ENCODE measurements at regions of chr5 and their contacts with region 1.

Region 1: DNA sequence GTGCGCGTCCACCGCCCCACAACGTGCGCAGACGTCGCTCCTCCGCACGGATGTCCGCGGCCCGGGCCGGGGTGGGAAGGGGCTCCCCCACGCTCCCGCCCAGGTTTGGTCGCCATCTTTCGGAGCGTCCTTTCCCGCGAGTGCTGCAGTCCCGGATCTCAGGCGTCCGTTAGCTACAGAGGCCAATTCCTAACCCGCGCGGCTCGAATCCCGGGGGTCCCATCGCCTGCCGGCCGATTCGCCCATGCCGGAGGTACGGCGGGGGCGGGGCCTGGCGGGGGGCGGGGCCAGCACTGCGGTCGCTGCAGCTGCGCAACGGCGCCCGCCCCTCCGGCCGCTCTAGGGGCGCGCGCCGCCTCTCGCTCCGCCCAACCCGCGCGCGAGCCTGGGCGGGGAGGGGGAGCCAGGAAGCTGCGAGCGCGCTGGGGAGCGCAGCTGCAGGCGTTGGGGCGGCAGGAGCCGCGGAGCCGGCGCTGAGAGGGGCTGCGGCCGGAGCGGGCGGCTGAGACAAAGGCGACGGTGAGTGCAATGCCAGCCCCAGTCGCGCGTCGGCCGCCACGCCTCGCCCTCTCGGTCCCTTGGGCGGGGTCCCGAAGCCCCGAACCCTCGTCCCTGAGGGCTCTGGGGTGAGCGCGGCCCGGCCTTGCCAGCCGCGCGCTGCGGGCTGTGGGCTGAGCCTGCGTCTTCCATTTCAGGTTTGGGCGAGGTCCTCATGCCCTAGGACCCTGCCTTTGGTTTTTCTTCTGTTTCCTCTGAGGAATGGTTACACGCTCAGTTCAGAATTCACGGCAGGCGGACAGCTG is at the start of gene CDC42SE2:
- DNase-seq: peak; percentile 91
- ATAC-seq: peak; percentile 86
- H3K4me3 Mint-ChIP-seq: peak within 1 kb of the TSS; percentile 81
- H3K27ac Mint-ChIP-seq: peak within 1 kb of the TSS; percentile 96
- H3K4me1 Mint-ChIP-seq: peaks cover 44% of the 10 kb centered on the region
- H3K27me3 Mint-ChIP-seq: no peaks in the 10 kb centered on the region
- total RNA-seq, gene CDC42SE2: 68.3 to 99.6 TPM

Region 2: DNA sequence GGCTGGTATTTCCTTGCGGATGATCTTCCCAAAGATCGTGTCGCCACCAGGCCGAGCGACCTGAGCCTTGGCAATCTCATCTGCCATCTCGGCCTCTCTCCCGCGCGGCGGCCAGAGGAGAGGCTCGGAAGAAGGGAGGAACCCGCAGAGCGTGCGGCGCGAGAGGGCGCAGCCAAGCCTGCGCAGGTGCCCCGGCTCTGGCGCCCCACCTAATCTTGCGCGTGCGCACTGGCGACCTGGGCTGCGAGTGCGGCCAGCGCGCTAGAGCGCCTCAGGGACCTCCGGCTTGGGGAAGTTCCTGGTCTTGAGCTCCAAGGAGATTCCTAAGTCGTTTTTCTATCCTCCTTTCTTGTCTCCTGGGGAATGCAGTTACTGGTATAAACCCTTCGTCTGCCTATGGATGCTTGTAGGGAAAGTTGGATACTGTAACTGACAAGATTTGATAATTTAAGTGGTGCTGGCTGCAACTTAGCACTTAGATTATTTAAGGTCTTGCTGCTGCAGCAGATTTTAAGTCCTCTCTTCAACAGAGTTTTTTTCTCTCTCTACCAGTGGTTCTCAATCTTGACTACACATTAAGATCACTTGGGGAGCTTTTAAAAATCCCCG is 98.6 kb before region 1 on chr5 and contains the start of gene HINT1:
- CTCF ChIA-PET with region 1: interaction called, 5 read pairs
- POLR2A ChIA-PET with region 1: interaction called, 4 read pairs
- intact Hi-C with region 1: loop called (anchors 1 to 2 kb)
- DNase-seq: peak; percentile 96
- ATAC-seq: peak; percentile 89
- H3K4me3 Mint-ChIP-seq: peak within 1 kb of the TSS; percentile 83
- H3K27ac Mint-ChIP-seq: peak within 1 kb of the TSS; percentile 99
- H3K4me1 Mint-ChIP-seq: peaks cover 51% of the 10 kb centered on the region
- H3K27me3 Mint-ChIP-seq: no peaks in the 10 kb centered on the region
- total RNA-seq, gene HINT1: 298 to 312 TPM

Region 3: GRCh38 chr5:131170540-131171275 is 93.1 kb before region 1 on chr5 and contains the start of gene LYRM7:
- CTCF ChIA-PET with region 1: interaction called, 5 read pairs
- POLR2A ChIA-PET with region 1: interaction called, 4 read pairs
- intact Hi-C with region 1: loop called (anchors 1 to 2 kb)
- DNase-seq: peak; percentile 97
- ATAC-seq: peak; percentile 96
- H3K4me3 Mint-ChIP-seq: peak within 1 kb of the TSS; percentile 95
- H3K27ac Mint-ChIP-seq: peak within 1 kb of the TSS; percentile 93
- H3K4me1 Mint-ChIP-seq: peaks cover 34% of the 10 kb centered on the region
- H3K27me3 Mint-ChIP-seq: no peaks in the 10 kb centered on the region
- total RNA-seq, gene LYRM7: 16.0 to 20.7 TPM

Region 4: GRCh38 chr5:131281133-131281867 is 17.5 kb after region 1 on chr5:
- CTCF ChIA-PET with region 1: interaction called, 33 read pairs
- POLR2A ChIA-PET with region 1: interaction called, 10 read pairs
- intact Hi-C with region 1: loop called (anchors 1 to 2 kb)
- DNase-seq: no peak
- ATAC-seq: peak; percentile 78
- H3K4me3 Mint-ChIP-seq: peak overlapping the region; percentile 74
- H3K27ac Mint-ChIP-seq: peak overlapping the region; percentile 95
- H3K4me1 Mint-ChIP-seq: peaks cover 90% of the 10 kb centered on the region
- H3K27me3 Mint-ChIP-seq: no peaks in the 10 kb centered on the region

Region 5: DNA sequence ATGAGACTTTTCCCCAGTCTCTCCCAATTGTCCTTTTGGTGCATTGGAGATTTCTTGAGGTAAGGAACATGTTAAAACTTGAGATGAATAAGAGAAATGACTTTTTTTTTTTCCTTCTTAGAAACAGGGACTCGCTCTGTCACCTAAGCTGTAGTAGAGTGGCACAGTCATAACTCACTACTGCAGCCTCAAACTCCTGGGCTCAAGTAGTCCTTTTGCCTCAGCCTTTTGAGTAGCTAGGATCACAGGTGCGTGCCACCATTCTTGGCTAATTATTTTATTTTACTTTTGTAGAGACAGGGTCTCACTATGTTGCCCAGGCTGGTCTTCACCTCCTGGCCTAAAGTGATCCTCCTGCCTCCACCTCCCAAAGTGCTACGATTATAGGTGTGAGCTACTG is 25.9 kb after region 1 on chr5:
- CTCF ChIA-PET with region 1: interaction called, 6 read pairs
- POLR2A ChIA-PET with region 1: interaction called, 9 read pairs
- intact Hi-C with region 1: loop called (anchors 1 to 2 kb)
- DNase-seq: peak; percentile 61
- ATAC-seq: peak; percentile 80
- H3K4me3 Mint-ChIP-seq: peak overlapping the region; percentile 64
- H3K27ac Mint-ChIP-seq: peak overlapping the region; percentile 98
- H3K4me1 Mint-ChIP-seq: peaks cover 72% of the 10 kb centered on the region
- H3K27me3 Mint-ChIP-seq: no peaks in the 10 kb centered on the region

Region 6: DNA sequence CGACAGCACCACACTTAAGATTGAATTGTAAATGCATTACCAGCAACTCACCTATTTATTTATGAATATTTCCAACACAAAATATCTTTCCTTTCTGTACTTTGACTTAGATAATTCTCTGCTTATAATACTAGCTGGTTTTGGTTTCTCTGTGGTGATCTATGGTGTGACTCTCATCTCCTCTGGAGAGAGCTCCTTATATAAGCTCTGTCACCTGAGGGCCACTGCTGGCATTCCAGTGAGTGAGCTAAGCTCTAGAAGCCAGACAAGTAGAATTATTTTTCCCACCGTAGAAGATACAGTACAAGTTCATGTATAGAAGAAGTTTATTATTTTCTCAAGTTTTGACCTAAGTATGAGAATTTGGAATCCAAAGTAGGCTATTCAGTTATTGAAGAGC is 111.5 kb after region 1 on chr5:
- CTCF ChIA-PET with region 1: interaction called, 46 read pairs
- POLR2A ChIA-PET with region 1: interaction called, 12 read pairs
- intact Hi-C with region 1: no loop called
- DNase-seq: no peak
- ATAC-seq: no peak
- H3K4me3 Mint-ChIP-seq: no peak overlapping the region
- H3K27ac Mint-ChIP-seq: peak overlapping the region; percentile 71
- H3K4me1 Mint-ChIP-seq: peaks cover 96% of the 10 kb centered on the region
- H3K27me3 Mint-ChIP-seq: no peaks in the 10 kb centered on the region

Region 7: DNA sequence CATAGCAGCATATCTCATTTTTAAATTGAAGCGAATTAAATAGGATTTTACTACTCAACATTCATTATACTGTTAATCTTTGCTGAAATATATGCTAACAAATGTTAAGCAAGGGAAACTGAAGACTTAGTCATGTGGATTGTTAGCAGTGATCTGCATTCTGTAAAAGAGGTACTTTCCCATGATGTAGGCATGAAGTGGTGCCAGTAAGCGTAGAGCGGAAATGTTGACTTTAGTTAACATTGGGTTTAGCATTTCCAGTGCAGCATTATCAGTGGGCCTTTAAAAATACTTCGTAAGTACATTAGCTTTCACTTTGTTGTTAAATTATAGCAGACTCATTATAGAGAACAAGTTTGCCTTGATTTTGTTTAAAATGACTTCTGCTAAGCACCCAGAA is 130.3 kb after region 1 on chr5:
- CTCF ChIA-PET with region 1: interaction called, 11 read pairs
- POLR2A ChIA-PET with region 1: interaction called, 8 read pairs
- intact Hi-C with region 1: no loop called
- DNase-seq: peak; percentile 68
- ATAC-seq: peak; percentile 68
- H3K4me3 Mint-ChIP-seq: peak overlapping the region; percentile 65
- H3K27ac Mint-ChIP-seq: peak overlapping the region; percentile 97
- H3K4me1 Mint-ChIP-seq: peaks cover 85% of the 10 kb centered on the region
- H3K27me3 Mint-ChIP-seq: no peaks in the 10 kb centered on the region

Measured in activated CD4-positive, alpha-beta T cell treated with anti-CD3 and anti-CD28 coated beads for 36 hours (primary cell).